A549 (cell line): ENCODE measurements at regions of chr14 and their contacts with region 1.

Region 1: DNA sequence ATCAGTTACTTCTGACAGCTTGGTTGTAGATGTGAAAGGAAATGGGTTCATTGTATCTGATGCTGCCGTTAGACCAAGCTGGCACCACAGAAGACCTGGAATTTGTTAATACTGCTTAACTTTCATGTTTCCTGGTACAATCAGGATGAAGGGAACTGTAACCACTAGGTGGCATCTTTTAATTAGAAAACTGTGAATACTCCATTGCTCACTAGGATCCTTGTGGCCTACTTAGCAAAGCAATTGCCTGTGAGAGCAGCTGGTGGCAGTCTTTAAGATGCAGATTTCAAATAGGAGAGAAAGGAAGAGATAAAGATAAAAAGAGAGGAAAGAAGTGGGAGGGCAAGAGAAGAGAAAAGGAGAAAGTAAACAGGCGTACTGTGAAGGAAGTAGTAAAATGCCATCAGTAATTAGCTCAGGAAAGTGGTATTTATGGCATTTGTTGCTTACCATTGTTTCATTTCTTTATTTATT is 114.5 kb downstream of the RAD51B start:
- DNase-seq: peak; percentile 82 to 89
- ATAC-seq: peak; percentile 99
- H3K4me3 ChIP-seq: no peak overlapping the region
- H3K27ac ChIP-seq: peak overlapping the region; percentile 73 to 78
- H3K4me1 ChIP-seq: peaks cover 13% of the 10 kb centered on the region
- CTCF ChIP-seq: peak; percentile 93
- EP300 ChIP-seq: no peak
- POLR2A ChIP-seq: no peak
- RAD21 ChIP-seq: peak; percentile 89 to 93

Region 2: DNA sequence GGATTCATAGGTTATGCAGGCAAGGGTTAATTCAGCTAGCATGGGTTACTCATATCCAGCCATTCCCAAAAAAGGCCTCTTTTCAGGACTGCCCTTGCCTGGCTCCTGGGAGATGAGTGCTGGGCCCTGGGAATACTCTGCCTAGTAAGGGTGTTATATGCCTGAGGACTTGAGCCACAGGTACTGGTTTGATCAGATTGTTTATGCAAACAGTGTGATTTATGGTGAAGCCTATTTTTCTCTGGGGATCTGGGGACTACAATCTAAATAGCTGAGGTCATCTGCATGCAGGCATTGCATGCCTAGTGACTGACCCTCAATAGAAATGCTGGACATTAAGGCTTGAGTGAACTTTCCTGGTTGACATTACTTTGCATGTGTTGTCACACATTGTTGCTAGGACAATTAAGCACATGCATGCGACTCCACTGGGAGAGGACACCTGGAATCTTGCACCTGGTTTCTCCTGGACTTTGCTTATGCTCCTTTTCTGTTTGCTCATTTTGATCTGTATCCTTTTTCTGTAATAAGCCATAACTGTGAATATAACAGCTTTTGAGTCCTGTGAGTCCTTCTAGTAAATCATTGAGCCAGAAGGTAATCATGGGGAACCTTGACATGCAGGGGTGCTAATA is 41.5 kb before region 1 on chr14:
- CTCF ChIA-PET with region 1: interaction called, 10 read pairs
- POLR2A ChIA-PET with region 1: no interaction called
- DNase-seq: no peak
- ATAC-seq: no peak
- H3K4me3 ChIP-seq: no peak overlapping the region
- H3K27ac ChIP-seq: no peak overlapping the region
- H3K4me1 ChIP-seq: peaks cover 1% of the 10 kb centered on the region; the same call in 1 of the 3 replicates
- CTCF ChIP-seq: no peak
- EP300 ChIP-seq: no peak
- POLR2A ChIP-seq: no peak
- RAD21 ChIP-seq: no peak

Region 3: GRCh38 chr14:67957946-67958345 is 23.9 kb after region 1 on chr14:
- CTCF ChIA-PET with region 1: no interaction called
- POLR2A ChIA-PET with region 1: no interaction called
- DNase-seq: no peak
- ATAC-seq: no peak
- H3K4me3 ChIP-seq: no peak overlapping the region
- H3K27ac ChIP-seq: no peak overlapping the region
- H3K4me1 ChIP-seq: peaks cover 11% of the 10 kb centered on the region; the same call in 2 of the 3 replicates
- CTCF ChIP-seq: no peak
- EP300 ChIP-seq: no peak
- POLR2A ChIP-seq: no peak
- RAD21 ChIP-seq: no peak

Region 4: DNA sequence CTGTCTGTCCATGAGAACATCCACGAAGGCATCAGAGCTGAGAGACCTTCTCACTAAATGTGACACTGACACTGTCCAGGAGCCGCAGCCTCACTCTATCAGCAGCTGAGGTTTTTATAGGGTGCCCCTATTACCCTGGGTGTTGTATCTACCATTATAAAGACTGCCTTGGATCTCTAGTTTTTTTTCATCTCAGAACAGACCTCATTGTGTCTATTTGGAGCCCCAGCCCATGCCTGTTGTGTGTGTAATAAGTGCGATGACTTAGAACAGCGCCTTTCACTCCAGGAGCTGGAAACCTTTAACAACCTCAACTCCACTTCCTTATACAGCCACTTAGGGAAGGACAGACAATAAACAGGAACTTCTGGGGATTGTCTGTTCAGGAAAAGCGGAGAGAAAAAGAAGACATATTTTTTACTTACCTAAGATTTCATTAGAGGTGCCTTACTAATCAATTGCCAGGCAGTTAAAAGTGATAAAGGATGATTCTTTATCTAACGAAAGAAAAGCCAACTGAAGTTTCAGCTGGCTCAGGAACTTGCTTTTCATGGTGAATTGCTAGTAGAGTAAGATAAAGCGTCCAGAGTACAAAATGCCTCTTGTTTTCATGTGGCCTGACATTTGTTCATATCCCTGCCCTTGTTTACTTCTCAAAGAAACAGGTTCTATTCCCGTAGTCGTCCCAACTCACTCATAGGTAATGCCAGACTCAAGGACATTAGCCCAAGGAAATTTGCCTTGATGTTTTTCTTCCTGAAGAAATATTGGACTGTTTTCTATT is 306.1 kb after region 1 on chr14:
- CTCF ChIA-PET with region 1: interaction called, 10 read pairs
- POLR2A ChIA-PET with region 1: no interaction called
- DNase-seq: no peak
- ATAC-seq: no peak; a peak in 1 of 6 replicates
- H3K4me3 ChIP-seq: no peak overlapping the region
- H3K27ac ChIP-seq: peak overlapping the region; percentile 46 to 76
- H3K4me1 ChIP-seq: peaks cover 19% of the 10 kb centered on the region
- CTCF ChIP-seq: no peak
- EP300 ChIP-seq: no peak
- POLR2A ChIP-seq: no peak
- RAD21 ChIP-seq: no peak

Region 5: DNA sequence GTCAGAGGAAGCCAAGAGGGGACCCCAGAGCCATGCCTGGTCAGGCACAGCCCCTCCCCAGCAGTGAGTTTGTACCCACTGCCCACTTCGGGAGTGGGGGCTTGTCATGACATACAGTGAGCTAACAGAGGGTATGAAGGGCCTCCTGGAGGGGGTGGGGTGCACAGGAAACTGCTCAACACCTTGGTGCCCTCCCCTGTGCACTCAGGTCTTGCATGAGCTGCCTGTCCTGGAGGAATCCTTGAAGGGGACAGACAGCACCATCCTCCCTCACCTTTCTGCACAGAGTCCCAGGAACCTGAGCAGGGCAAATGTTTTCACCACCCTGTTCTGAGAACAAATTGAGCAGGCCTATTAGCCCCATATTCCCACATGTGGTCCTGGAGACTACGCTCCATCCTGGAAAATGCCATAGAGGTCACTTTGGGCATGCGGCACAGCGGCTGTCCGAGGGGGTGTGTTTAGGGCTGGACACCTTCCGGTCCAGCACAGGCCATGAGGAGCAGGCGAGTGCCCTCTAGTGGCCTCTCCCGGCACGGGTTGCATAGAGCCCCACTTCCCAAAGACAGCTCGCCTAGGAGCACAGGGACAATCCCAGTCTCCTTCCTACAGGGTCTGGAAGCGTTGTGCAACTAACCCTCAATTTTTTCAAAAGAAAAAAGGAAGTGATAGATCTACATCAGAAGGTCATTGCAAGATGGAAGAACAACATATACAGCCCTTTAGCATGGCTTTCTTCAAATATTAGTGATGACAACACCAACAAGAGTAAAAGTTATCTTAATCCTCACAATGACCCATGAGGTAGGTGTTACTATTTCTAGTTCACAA is 890.7 kb after region 1 on chr14:
- CTCF ChIA-PET with region 1: interaction called, 16 read pairs
- POLR2A ChIA-PET with region 1: no interaction called
- DNase-seq: peak; percentile 80 to 90
- ATAC-seq: peak; percentile 94 to 99
- H3K4me3 ChIP-seq: no peak overlapping the region
- H3K27ac ChIP-seq: peak overlapping the region; percentile 60 to 72
- H3K4me1 ChIP-seq: no peaks in the 10 kb centered on the region
- CTCF ChIP-seq: peak; percentile 84
- EP300 ChIP-seq: no peak
- POLR2A ChIP-seq: no peak
- RAD21 ChIP-seq: peak; percentile 80 to 85

Region 6: DNA sequence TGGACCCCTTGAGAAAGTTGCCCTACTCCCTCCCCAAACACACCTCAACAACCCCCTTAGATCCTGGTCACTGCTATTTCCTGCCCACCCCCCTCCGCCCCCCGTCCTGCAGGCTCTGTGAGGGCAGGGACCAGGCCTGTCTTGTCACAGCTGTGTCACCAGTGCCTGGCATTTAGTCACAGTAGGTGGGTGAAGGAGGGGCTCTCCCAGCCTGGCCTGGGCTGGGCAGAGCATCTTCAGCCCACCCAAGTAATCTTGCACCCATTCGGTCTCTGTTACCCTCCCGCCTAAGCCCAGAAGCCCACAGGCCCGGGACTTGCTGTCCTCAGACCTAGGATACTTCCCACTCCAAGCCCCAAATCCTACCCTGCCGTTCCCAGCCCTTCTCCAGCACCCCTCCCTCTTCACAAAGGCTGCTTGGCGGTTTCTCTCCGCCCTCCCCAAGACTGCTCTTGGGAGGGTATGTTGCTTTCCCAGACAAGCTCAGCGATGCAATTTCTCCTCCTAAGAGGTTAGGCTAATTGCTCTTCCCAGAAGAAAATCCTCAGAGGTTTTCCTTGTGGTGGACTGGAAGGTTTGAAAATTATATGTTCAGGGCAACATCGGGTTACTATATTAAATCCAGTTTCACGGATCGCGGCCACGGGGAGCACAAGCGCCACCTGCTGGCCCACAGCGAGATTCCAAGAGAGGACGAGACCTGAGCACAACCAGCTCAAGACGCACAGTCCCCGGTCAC is 909.6 kb after region 1 on chr14:
- CTCF ChIA-PET with region 1: interaction called, 27 read pairs
- POLR2A ChIA-PET with region 1: no interaction called
- DNase-seq: peak; percentile 69 to 76
- ATAC-seq: peak; percentile 91 to 96
- H3K4me3 ChIP-seq: no peak overlapping the region; the same call in 2 of the 3 replicates
- H3K27ac ChIP-seq: peak overlapping the region; percentile 35 to 83
- H3K4me1 ChIP-seq: 0 out of 3 replicates have a peak, but pooled peaks cover 4% of the 10 kb centered on the region
- CTCF ChIP-seq: peak; percentile 96
- EP300 ChIP-seq: no peak
- POLR2A ChIP-seq: no peak
- RAD21 ChIP-seq: peak; percentile 83 to 87

Region 7: GRCh38 chr14:69398053-69398817 is 1464.2 kb after region 1 on chr14 and contains the starts of genes ERH and SLC39A9:
- CTCF ChIA-PET with region 1: no interaction called
- POLR2A ChIA-PET with region 1: no interaction called
- DNase-seq: peak; percentile 96 to 98
- ATAC-seq: peak; percentile 96 to 98
- H3K4me3 ChIP-seq: peak within 1 kb of the TSS; percentile 92
- H3K27ac ChIP-seq: peak within 1 kb of the TSS; percentile 96 to 97
- H3K4me1 ChIP-seq: peaks cover 38% of the 10 kb centered on the region
- CTCF ChIP-seq: no peak
- EP300 ChIP-seq: no peak
- POLR2A ChIP-seq: peak; percentile 85
- RAD21 ChIP-seq: no peak
- polyA plus RNA-seq, gene ERH: 302 and 377 TPM in 2 replicates
- polyA plus RNA-seq, gene SLC39A9: 116 and 125 TPM in 2 replicates